ENCODE measurements at regions of chr10 and their contacts with region 1.

Region 1: GRCh38 chr10:24360282-24361127 is 151.6 kb downstream of the KIAA1217 start:
- DNase-seq: no peak
- ATAC-seq: peak; percentile 90
- H3K4me3 ChIP-seq: no peak overlapping the region
- H3K27ac ChIP-seq: no peak overlapping the region
- H3K4me1 ChIP-seq: no peaks in the 10 kb centered on the region
- H3K27me3 ChIP-seq: no peaks in the 10 kb centered on the region
- CTCF ChIP-seq: peak; percentile 67 to 80 (median 67); a peak in 5 of 6 replicates
- EP300 ChIP-seq: no peak
- POLR2A ChIP-seq: no peak
- RAD21 ChIP-seq: peak; percentile 82

Region 2: DNA sequence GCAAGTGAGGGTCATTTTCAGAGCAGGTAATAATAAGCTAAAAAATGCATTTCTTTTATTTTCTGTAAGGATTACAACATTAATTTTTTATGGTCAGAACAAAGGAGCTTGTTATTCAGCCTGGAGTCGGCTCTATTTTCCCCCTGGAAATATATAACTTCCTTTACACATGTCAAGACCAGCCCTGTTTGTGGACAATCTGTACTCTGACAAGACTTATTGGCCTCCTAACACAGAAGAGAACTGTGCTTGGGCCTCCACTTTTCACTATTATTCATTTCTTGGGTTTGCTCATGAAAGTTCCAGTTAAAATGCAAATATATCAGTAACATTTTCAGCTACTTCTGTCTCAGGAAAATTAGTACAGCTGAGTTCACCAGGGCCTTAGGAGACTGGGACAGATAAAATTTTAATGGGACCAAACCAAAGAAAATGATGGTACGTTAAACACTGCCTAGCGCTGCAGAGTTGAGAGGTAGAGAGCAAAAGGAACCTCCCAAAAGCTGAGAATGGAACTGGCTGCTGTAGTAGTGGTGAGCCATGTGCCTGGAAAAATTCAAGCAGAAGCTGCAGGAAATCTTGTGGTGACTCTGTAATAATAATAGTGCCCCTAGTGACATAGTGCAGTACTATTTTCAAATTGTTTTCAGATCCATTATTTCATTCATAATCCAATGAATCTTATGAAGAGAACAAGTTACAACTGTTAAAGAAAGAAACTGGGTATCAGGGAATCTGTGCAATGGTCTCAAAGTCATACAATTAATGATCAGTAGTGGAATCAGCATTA is 378.8 kb before region 1 on chr10:
- CTCF ChIA-PET with region 1: no interaction called
- POLR2A ChIA-PET with region 1: no interaction called
- RAD21 ChIA-PET with region 1: no interaction called
- SMC1A ChIA-PET with region 1: no interaction called
- in situ Hi-C with region 1: loop called (anchors 5 kb)
- intact Hi-C with region 1: no loop called
- DNase-seq: no peak
- ATAC-seq: no peak
- H3K4me3 ChIP-seq: no peak overlapping the region
- H3K27ac ChIP-seq: no peak overlapping the region
- H3K4me1 ChIP-seq: no peaks in the 10 kb centered on the region
- H3K27me3 ChIP-seq: no peaks in the 10 kb centered on the region
- CTCF ChIP-seq: no peak
- EP300 ChIP-seq: no peak
- POLR2A ChIP-seq: no peak
- RAD21 ChIP-seq: no peak

Region 3: GRCh38 chr10:24201503-24202180 is 158.9 kb before region 1 on chr10:
- CTCF ChIA-PET with region 1: interaction called, 13 read pairs
- POLR2A ChIA-PET with region 1: no interaction called
- RAD21 ChIA-PET with region 1: interaction called, 7 read pairs
- SMC1A ChIA-PET with region 1: interaction called, 3 read pairs
- in situ Hi-C with region 1: no loop called
- intact Hi-C with region 1: no loop called
- DNase-seq: no peak
- ATAC-seq: no peak
- H3K4me3 ChIP-seq: no peak overlapping the region
- H3K27ac ChIP-seq: no peak overlapping the region
- H3K4me1 ChIP-seq: peaks cover 3% of the 10 kb centered on the region
- H3K27me3 ChIP-seq: no peaks in the 10 kb centered on the region
- CTCF ChIP-seq: no peak
- EP300 ChIP-seq: no peak
- POLR2A ChIP-seq: no peak
- RAD21 ChIP-seq: no peak

Region 4: GRCh38 chr10:24209946-24210491 is 150.5 kb before region 1 on chr10:
- CTCF ChIA-PET with region 1: interaction called, 22 read pairs
- POLR2A ChIA-PET with region 1: interaction called, 3 read pairs
- RAD21 ChIA-PET with region 1: interaction called, 8 read pairs
- SMC1A ChIA-PET with region 1: interaction called, 5 read pairs
- in situ Hi-C with region 1: no loop called
- intact Hi-C with region 1: no loop called
- DNase-seq: peak; percentile 82
- ATAC-seq: peak; percentile 75
- H3K4me3 ChIP-seq: peak overlapping the region; percentile 62
- H3K27ac ChIP-seq: peak overlapping the region; percentile 62
- H3K4me1 ChIP-seq: peaks cover 9% of the 10 kb centered on the region
- H3K27me3 ChIP-seq: no peaks in the 10 kb centered on the region
- CTCF ChIP-seq: no peak
- EP300 ChIP-seq: peak; percentile 74 to 87; a peak in 2 of 4 replicates
- POLR2A ChIP-seq: no peak
- RAD21 ChIP-seq: no peak

Region 5: DNA sequence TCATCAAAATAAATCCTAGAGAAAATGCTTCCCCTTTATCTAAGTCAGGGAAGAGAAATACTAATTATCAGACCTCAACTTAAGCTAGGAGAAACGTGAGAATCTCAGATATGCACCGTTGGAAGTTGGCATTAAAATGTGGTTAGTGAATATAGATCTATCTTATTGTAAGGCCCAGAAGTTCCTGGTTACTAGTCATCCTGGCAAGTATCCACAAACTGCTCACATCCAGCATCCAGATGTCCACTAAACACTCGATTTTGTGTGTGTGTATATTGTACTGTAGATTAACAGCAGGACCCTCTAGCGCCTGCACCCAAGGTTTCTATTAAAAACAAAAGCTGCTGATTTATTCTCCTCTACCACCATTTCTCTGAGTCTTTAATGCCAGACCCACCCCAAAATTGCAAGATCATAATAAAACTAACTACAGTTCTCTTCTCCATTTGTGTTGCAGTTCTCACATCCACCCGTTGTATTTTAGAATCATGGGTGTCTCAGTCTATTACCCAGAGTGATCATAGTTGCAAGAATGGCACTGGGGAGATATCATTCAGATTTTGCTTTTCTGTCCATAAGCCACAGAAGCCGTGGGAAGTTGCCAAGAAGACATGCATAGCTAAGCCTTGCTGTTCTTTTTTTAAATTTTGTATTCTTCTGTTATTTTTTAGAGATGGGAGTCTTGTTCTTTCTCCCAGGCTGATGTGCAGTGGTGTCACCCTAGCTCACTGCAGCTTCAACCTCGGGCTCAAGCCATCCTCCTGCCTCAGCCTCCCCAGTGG is 13.8 kb after region 1 on chr10:
- CTCF ChIA-PET with region 1: interaction called, 5 read pairs
- POLR2A ChIA-PET with region 1: interaction called, 4 read pairs
- RAD21 ChIA-PET with region 1: no interaction called
- SMC1A ChIA-PET with region 1: interaction called, 11 read pairs
- in situ Hi-C with region 1: no loop called
- intact Hi-C with region 1: no loop called
- DNase-seq: no peak
- ATAC-seq: no peak
- H3K4me3 ChIP-seq: no peak overlapping the region
- H3K27ac ChIP-seq: no peak overlapping the region
- H3K4me1 ChIP-seq: no peaks in the 10 kb centered on the region
- H3K27me3 ChIP-seq: no peaks in the 10 kb centered on the region
- CTCF ChIP-seq: no peak
- EP300 ChIP-seq: no peak
- POLR2A ChIP-seq: no peak
- RAD21 ChIP-seq: no peak

Region 6: DNA sequence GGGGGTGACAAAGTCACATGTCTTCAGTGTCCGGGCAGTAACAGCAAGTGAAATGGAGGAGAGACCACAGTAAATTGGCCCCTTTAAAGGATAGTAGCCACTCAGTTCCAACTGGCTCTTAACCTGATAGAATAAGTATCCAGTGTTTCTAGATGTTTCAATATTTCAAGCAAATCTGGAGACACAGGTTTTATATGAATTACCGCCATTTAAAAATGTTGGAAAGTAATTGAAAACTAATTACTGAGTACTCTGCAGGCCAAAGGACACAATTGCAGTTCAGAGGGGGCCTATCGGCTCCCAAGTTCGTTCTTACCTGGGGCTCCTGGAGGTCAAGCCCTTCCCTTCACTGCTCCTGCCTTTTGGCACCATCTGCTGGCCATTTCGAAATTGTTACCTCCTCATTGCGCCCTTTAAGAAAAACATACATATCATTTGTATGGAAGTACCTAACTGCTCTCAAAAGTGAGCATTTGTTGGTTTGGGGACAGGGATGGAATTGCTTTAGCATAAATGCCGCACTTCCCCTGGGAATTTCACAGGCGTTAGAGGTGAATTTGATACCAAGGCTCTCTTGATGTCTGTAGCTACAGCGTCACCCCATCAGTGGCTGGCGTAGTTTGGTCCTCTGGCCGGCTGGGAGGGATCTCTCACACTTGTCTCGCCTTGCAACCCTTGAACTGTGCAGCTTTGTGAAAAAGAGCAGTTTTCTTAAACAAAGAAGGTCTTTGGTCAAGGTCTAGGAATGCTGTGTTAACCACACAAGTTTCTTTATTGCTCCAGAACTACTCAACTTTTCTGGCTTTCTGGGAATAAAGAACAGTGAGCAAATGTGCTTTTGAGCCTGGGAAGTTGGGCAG is 143.2 kb after region 1 on chr10:
- CTCF ChIA-PET with region 1: interaction called, 13 read pairs
- POLR2A ChIA-PET with region 1: interaction called, 8 read pairs
- RAD21 ChIA-PET with region 1: interaction called, 3 read pairs
- SMC1A ChIA-PET with region 1: interaction called, 7 read pairs
- in situ Hi-C with region 1: no loop called
- intact Hi-C with region 1: no loop called
- DNase-seq: peak; percentile 36
- ATAC-seq: peak; percentile 93
- H3K4me3 ChIP-seq: no peak overlapping the region
- H3K27ac ChIP-seq: no peak overlapping the region
- H3K4me1 ChIP-seq: no peaks in the 10 kb centered on the region
- H3K27me3 ChIP-seq: no peaks in the 10 kb centered on the region; a peak in 1 of 4 replicates
- CTCF ChIP-seq: peak; percentile 50 to 73 (median 60); a peak in 5 of 6 replicates
- EP300 ChIP-seq: no peak
- POLR2A ChIP-seq: no peak
- RAD21 ChIP-seq: peak; percentile 92